ENCODE measurements at regions of chr21 and their contacts with region 1.

Region 1: DNA sequence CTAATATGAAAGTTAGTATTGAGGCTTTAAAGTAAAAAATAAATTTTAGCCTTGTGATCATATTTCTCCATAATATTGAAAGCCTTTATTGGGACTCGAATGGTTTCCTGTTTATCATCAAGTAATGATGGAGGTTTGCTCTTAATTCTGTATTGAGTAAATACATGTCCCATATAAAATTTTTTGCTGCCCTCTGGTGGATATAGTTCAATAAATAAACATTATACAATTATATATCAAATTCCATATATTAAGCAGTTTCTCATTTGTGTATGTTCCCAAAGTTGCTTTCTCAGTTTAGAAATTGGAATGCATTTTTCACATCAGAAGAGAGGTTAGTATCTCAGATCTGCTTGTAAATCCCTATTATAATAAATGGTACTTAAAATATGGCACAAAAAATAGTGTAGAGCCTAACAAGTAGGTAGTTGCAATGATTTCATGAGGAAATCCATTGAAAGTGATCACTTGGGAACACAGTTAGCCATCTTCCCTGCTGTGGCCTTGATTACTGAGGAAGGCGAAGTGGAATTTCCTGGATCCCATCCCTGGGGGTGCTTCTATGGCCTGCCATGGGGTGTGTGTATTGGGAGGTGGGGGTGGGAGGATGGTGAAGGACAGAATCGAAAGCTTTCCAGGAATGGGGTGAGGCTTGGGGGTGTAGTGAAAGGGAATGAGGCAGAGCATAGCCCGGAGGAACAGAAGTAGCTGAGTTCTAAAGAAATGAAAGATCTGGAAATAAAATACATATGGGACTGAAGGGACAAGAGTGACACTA is 84.1 kb upstream of the C21orf91 start:
- DNase-seq: no peak
- H3K4me3 ChIP-seq: no peak overlapping the region
- CTCF ChIP-seq: no peak
- POLR2A ChIP-seq: no peak

Region 2: DNA sequence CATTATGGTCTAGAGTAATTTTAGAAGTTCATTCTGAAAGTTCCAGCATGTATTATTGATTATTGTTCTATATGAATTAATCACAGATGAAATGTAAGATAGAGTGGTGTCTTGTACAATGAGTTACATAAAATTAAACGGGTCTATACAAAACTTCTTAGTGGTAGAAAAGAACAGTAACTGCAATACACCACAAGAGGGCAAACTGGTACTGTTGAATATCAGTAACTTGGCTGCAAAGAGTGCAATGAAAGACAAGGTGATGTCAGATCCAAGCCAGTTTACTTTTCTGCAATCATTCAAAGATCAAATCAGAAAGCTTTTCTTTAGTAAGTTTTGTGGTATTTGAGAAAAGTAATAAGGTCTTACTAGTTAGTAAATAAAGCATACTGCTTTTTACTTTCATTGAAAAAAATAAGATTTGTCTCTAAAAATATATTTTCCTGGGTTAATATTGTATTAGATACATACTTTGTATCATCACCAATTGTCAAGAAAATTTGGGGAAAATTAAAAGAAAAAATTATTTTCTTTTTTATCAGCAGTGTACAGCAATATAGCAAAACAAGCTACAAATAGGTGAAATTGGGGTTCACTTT is 224.1 kb before region 1 on chr21:
- intact Hi-C with region 1: loop called (anchors 10 kb)
- DNase-seq: no peak
- H3K4me3 ChIP-seq: no peak overlapping the region
- CTCF ChIP-seq: peak in 1 of 3 donors; percentile 82
- POLR2A ChIP-seq: no peak

Region 3: GRCh38 chr21:17889171-17889570 is 14.0 kb before region 1 on chr21:
- intact Hi-C with region 1: no loop called
- DNase-seq: no peak
- H3K4me3 ChIP-seq: no peak overlapping the region
- CTCF ChIP-seq: no peak
- POLR2A ChIP-seq: no peak

Measured in lower leg skin (tissue), 4 donors.